ENCODE measurements at regions of chr12 and their contacts with region 1.

Region 1: DNA sequence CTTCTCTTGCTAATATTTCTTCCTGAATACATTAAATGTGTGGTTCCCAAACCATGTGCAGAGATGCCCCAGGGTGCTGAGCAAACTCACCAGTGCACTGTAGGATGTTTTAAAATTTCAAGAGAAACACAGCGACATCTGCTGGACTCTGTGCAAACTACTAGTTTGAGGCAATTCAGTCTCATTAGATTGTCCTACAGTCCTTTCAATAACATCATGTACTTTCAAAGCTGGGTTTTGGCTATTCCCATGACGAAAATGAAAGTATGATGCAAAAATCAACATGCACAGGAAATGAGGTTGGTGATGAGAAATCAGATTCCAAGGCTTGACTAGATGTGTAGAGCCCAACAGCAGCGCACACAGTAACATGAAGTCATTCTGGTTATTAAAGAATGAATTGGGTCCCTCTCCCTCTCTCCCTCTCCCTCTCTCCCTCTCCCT is 66.3 kb downstream of the CLIP1 start:
- DNase-seq: peak; percentile 77
- H3K4me3 Mint-ChIP-seq: no peak overlapping the region
- H3K27ac Mint-ChIP-seq: no peak overlapping the region
- H3K4me1 Mint-ChIP-seq: peaks cover 6% of the 10 kb centered on the region
- H3K27me3 Mint-ChIP-seq: no peaks in the 10 kb centered on the region

Region 2: GRCh38 chr12:122309564-122310121 is 46.6 kb before region 1 on chr12:
- CTCF ChIA-PET with region 1: interaction called, 11 read pairs
- intact Hi-C with region 1: no loop called
- DNase-seq: no peak
- H3K4me3 Mint-ChIP-seq: no peak overlapping the region
- H3K27ac Mint-ChIP-seq: no peak overlapping the region
- H3K4me1 Mint-ChIP-seq: no peaks in the 10 kb centered on the region
- H3K27me3 Mint-ChIP-seq: no peaks in the 10 kb centered on the region

Region 3: DNA sequence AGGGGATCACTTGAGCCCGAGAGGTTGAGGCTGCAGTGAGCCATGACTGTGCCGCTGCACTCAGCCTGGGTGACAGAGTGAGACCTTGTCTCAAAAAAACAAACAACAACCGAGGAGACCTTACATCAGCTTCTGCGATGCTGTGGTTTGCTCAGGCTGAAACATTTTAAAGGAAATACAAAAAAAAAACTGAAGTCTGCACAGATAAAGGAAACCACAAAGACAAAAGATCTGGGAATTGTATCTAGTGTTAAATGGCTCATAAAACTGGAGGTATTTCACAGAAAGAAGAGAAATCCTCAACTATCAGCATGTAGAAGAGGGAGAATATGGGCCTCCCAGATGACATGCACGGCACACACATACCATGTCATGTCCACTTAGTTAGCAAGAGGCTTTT is 29.6 kb before region 1 on chr12:
- CTCF ChIA-PET with region 1: interaction called, 16 read pairs
- intact Hi-C with region 1: no loop called
- DNase-seq: peak; percentile 36
- H3K4me3 Mint-ChIP-seq: no peak overlapping the region
- H3K27ac Mint-ChIP-seq: peak overlapping the region; percentile 50
- H3K4me1 Mint-ChIP-seq: peaks cover 22% of the 10 kb centered on the region
- H3K27me3 Mint-ChIP-seq: no peaks in the 10 kb centered on the region

Region 4: DNA sequence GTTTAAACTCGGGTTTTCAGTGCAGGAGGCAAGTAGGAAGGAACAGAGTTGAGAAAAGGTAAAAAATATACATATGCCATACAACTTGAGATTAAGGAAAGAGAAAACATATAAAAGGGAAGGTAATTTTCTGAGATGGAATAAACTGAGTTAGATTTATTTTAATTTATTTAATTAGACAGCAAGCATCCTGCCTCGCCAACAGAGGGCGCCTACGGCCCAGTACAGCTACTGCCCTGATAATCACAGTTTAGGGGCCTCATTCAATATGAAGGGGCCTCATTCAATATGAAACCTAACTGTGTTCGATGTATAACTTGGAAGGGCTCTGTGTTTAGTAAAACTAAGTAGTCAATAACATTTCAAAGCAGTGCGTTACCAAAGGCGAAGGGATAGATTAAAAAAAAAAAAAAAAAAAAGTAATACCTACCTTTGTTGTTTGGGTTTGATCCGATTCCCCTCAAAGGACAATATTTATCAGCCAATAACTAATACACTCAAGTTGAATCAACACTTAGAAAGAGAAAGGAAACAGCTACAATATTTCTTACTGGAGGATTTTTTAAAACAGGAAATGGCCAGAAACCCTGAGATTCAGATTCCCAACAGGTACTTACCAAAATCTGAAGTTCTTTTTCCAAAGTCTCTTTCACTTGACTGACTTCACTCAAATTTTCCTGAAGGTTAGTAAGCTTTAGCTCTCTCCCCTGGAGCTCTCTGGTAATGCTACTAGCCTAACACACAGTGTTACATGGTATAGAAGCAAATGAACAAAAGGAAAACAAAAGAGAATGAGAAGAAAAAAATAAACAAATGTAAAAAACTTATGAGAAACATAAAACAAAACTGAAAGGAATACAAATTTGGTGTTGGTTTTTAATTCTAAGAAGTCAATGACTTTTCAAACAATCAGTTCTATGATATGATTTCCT is 19.9 kb before region 1 on chr12:
- CTCF ChIA-PET with region 1: interaction called, 21 read pairs
- intact Hi-C with region 1: no loop called
- DNase-seq: peak; percentile 63
- H3K4me3 Mint-ChIP-seq: no peak overlapping the region
- H3K27ac Mint-ChIP-seq: peak overlapping the region; percentile 32
- H3K4me1 Mint-ChIP-seq: peaks cover 11% of the 10 kb centered on the region
- H3K27me3 Mint-ChIP-seq: no peaks in the 10 kb centered on the region

Region 5: GRCh38 chr12:122558745-122559641 is 202.8 kb after region 1 on chr12:
- CTCF ChIA-PET with region 1: no interaction called
- intact Hi-C with region 1: no loop called
- DNase-seq: no peak
- H3K4me3 Mint-ChIP-seq: no peak overlapping the region
- H3K27ac Mint-ChIP-seq: no peak overlapping the region
- H3K4me1 Mint-ChIP-seq: peaks cover 7% of the 10 kb centered on the region
- H3K27me3 Mint-ChIP-seq: no peaks in the 10 kb centered on the region